HepG2 (cell line): ENCODE measurements at regions of chr4 and their contacts with region 1.

Region 1: GRCh38 chr4:13548984-13549546 is 4.8 kb upstream of the NKX3-2 start:
- DNase-seq: peak; percentile 65
- ATAC-seq: peak; percentile 72
- H3K4me3 ChIP-seq: peak overlapping the region; percentile 71 to 80 (median 76)
- H3K27ac ChIP-seq: no peak overlapping the region
- H3K4me1 ChIP-seq: peaks cover 28% of the 10 kb centered on the region
- H3K27me3 ChIP-seq: peaks cover 2 to 12% of the 10 kb centered on the region in 2 experiments; a peak in 4 of 5 replicates
- CTCF ChIP-seq: peak; percentile 95
- EP300 ChIP-seq: no peak
- POLR2A ChIP-seq: no peak
- RAD21 ChIP-seq: peak; percentile 90

Region 2: DNA sequence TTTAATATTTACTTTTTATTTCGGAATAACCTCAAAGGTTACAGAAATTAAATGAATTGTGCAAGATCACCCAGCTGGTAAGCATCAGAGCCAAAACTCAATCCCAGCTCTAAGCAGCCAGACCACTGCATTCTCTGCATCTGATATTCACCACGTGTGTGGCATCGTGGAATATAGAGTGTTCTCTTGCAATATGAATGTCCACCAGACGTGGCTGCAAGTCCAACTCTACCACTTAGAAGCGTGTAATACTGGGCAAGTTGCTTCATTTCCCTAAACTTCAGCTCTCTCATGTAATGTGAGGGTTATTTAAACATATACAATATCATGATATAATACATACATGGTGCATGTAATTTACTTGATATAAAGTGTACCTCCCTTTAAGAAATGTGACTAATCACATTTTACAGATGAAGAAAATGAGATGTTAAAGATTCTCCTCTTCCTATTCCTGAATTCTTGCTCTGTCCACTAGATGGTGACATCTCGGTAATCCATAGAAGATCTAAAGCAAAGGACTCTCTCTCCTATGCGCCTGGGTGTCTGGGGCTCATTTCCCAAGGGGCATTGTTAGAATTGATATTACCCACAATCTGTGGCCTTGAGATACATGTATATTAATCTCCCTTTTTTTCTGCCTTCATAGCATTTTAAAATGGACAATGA is 870.0 kb before region 1 on chr4:
- CTCF ChIA-PET with region 1: interaction called, 4 read pairs
- POLR2A ChIA-PET with region 1: no interaction called
- in situ Hi-C with region 1: no loop called
- intact Hi-C with region 1: loop called (anchors 2 kb)
- DNase-seq: peak; percentile 2
- ATAC-seq: peak; percentile 78
- H3K4me3 ChIP-seq: no peak overlapping the region
- H3K27ac ChIP-seq: no peak overlapping the region
- H3K4me1 ChIP-seq: no peaks in the 10 kb centered on the region
- H3K27me3 ChIP-seq: no peaks in the 10 kb centered on the region
- CTCF ChIP-seq: peak; percentile 45
- EP300 ChIP-seq: no peak
- POLR2A ChIP-seq: no peak
- RAD21 ChIP-seq: no peak

Region 3: GRCh38 chr4:12846368-12846767 is 702.7 kb before region 1 on chr4:
- CTCF ChIA-PET with region 1: interaction called, 19 read pairs
- POLR2A ChIA-PET with region 1: no interaction called
- in situ Hi-C with region 1: loop called (anchors 5 kb)
- intact Hi-C with region 1: loop called (anchors 1 kb)
- DNase-seq: no peak
- ATAC-seq: peak; percentile 33; the same call in 1 of the 3 replicates
- H3K4me3 ChIP-seq: no peak overlapping the region
- H3K27ac ChIP-seq: no peak overlapping the region
- H3K4me1 ChIP-seq: peaks cover 6% of the 10 kb centered on the region
- H3K27me3 ChIP-seq: no peaks in the 10 kb centered on the region; a peak in 1 of 5 replicates
- CTCF ChIP-seq: no peak
- EP300 ChIP-seq: no peak
- POLR2A ChIP-seq: no peak
- RAD21 ChIP-seq: no peak

Region 4: DNA sequence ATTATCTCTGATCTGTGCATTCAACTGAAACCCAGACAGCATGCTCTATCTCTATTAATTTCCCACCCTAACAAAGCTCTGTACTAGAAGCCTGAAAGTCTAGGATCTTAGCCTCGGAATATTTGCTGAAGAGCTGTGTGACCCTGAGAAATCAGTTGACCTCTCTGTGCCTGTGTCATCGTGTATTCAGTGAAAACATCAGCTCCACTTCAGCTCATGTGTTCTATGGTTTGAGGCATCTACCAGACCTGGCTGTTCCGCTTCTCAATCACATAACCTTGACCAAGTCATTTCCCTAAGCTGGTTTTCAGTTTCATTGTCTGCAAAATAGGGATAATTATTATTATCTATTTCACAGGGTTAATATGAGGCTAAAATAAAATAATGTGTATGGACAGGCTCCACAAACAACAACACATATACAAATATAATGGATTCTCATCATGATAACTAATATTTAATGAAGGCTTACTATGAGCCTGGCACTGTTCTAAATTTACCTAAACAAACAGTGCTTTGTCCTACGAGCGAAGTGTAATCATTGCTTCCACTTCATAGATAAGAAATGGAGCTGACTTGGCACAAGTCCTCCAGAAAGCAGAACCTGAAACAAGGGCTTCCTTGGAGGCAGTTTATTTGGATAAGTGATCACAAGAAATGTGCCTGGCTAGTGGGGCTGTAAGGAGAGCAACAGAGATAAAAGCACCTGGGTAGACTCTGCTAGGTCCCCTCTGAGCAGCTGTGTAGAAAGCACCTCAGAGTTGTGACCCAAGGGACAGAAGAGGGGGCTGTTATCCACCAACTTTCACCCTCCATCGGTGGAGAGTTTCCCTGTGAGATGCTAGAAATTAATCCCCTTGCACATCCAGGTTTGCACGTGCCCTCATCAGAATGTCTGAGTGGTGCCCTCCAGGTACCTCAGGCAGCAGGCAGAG is 421.8 kb before region 1 on chr4:
- CTCF ChIA-PET with region 1: no interaction called
- POLR2A ChIA-PET with region 1: no interaction called
- in situ Hi-C with region 1: no loop called
- intact Hi-C with region 1: loop called (anchors 10 kb)
- DNase-seq: no peak
- ATAC-seq: peak; percentile 55
- H3K4me3 ChIP-seq: no peak overlapping the region
- H3K27ac ChIP-seq: no peak overlapping the region
- H3K4me1 ChIP-seq: peaks cover 12% of the 10 kb centered on the region; the same call in 1 of the 2 replicates
- H3K27me3 ChIP-seq: no peaks in the 10 kb centered on the region; a peak in 1 of 5 replicates
- CTCF ChIP-seq: peak; percentile 30
- EP300 ChIP-seq: no peak
- POLR2A ChIP-seq: no peak
- RAD21 ChIP-seq: no peak

Region 5: DNA sequence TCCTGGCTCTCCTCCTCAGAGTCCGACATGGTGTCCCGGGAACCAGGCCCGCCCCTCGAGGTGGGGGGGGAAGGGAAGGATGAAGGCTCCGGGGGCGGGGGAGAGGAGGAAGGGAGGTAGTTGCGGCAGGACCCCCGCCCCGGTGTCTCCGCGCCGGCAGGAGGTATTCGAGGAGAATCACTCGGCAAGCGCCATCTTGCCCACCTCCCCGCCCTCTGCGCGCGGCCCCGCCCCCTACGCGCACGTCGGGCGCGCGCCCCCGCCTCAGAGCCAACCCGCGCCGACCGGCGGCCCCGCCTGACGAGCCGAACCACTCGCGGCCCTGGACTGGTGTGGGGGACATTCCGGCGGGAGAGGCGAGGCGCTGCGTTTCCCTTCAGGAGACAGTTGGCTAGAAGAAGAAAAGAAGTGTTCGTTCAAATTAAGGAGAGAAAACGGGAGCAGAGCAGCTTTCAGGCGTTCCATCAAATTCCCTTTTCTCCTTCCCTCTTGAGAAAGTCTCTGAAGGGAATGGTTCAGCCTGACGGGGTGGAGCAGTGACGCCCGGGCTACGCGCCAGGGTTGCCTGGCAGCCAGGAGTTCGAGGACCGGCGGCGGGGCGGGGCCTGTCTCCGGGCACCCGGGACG is 64.8 kb before region 1 on chr4 and contains the start of gene RAB28:
- CTCF ChIA-PET with region 1: no interaction called
- POLR2A ChIA-PET with region 1: no interaction called
- in situ Hi-C with region 1: no loop called
- intact Hi-C with region 1: loop called (anchors 5 kb)
- DNase-seq: peak; percentile 83
- ATAC-seq: peak; percentile 96
- H3K4me3 ChIP-seq: peak within 1 kb of the TSS; percentile 78 to 94 (median 85)
- H3K27ac ChIP-seq: peak within 1 kb of the TSS; percentile 75
- H3K4me1 ChIP-seq: peaks cover 22% of the 10 kb centered on the region
- H3K27me3 ChIP-seq: no peaks in the 10 kb centered on the region; a peak in 1 of 5 replicates
- CTCF ChIP-seq: no peak
- EP300 ChIP-seq: no peak
- POLR2A ChIP-seq: peak; percentile 46 to 66; a peak in 3 of 4 replicates
- RAD21 ChIP-seq: no peak
- total RNA-seq, gene RAB28: 18.2 and 20.9 TPM in 2 replicates

Region 6: GRCh38 chr4:13783800-13784411 is 234.8 kb after region 1 on chr4:
- CTCF ChIA-PET with region 1: no interaction called
- POLR2A ChIA-PET with region 1: no interaction called
- in situ Hi-C with region 1: no loop called
- intact Hi-C with region 1: no loop called
- DNase-seq: peak; percentile 57
- ATAC-seq: peak; percentile 70
- H3K4me3 ChIP-seq: no peak overlapping the region
- H3K27ac ChIP-seq: no peak overlapping the region
- H3K4me1 ChIP-seq: no peaks in the 10 kb centered on the region
- H3K27me3 ChIP-seq: no peaks in the 10 kb centered on the region
- CTCF ChIP-seq: no peak
- EP300 ChIP-seq: no peak
- POLR2A ChIP-seq: no peak
- RAD21 ChIP-seq: no peak